Calu3 (cell line): ENCODE measurements at regions of chr17 and their contacts with region 1.

Region 1: DNA sequence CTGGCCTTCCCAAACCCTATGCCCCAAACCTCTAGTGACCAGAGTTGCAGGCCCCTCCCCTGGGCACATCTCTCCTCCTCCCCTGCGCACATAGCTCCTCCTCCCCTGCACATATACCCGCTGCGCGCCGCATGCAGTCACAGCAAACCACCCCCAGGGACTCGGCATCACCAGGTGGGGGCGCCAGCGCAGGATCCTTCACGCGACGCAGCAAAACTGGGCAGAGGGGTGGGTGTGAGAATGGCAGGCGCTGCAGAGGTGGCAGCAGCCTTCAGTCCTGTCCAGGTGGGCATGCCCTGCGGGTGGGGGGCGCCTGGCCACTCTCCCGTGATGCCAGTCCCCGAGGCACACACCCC is 5.6 kb downstream of the CORO6 start:
- DNase-seq: peak; percentile 86
- H3K4me3 Mint-ChIP-seq: peak overlapping the region; percentile 81
- H3K27ac Mint-ChIP-seq: no peak overlapping the region
- H3K4me1 Mint-ChIP-seq: peaks cover 14% of the 10 kb centered on the region
- H3K27me3 Mint-ChIP-seq: peaks cover 37% of the 10 kb centered on the region
- CTCF ChIP-seq: peak; percentile 67

Region 2: DNA sequence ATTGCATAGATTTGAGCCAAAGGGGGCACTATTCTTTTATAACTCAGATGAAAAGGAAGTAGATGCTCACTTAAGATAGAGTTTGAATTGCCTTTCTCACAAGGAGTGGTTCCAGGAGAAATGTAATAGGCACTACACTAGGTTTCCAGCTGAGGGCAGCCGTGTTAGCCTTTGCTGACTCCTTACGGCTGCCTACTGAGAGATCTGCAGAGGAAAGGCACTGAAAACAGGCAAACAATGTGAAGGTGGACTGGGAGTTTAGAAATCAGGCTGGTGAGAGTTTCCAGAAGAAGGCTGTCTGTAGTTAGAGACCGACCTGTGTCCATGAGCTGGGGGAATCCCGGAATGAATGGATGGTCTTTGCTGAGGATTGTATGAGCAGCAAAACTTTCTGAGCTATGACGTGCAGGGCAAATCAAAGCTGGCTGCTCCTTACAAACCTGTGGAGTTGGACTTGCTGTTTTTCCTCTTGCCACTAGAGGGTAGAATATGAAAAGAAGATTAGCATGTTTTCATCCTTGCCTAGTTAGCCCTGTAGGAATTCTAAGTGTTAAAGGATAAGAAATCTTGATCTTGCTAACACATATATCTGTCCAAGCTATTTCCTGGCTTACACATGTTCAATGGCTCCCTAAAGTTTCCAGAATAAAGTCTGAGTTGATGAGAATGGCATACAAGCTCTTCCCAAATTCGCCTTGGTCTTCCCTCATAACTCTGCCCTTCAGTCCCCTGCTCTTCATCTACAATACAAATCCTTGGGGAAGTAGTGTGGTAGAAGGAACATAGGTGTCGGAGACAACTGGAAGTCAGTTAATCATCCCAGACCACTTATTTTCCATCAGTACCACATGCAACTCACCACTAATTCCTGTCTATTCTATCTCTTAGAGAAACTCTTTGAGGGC is 247.0 kb before region 1 on chr17:
- CTCF ChIA-PET with region 1: interaction called, 11 read pairs
- intact Hi-C with region 1: no loop called
- DNase-seq: peak; percentile 55
- H3K4me3 Mint-ChIP-seq: no peak overlapping the region
- H3K27ac Mint-ChIP-seq: no peak overlapping the region
- H3K4me1 Mint-ChIP-seq: peaks cover 6% of the 10 kb centered on the region
- H3K27me3 Mint-ChIP-seq: no peaks in the 10 kb centered on the region
- CTCF ChIP-seq: peak; percentile 58

Region 3: DNA sequence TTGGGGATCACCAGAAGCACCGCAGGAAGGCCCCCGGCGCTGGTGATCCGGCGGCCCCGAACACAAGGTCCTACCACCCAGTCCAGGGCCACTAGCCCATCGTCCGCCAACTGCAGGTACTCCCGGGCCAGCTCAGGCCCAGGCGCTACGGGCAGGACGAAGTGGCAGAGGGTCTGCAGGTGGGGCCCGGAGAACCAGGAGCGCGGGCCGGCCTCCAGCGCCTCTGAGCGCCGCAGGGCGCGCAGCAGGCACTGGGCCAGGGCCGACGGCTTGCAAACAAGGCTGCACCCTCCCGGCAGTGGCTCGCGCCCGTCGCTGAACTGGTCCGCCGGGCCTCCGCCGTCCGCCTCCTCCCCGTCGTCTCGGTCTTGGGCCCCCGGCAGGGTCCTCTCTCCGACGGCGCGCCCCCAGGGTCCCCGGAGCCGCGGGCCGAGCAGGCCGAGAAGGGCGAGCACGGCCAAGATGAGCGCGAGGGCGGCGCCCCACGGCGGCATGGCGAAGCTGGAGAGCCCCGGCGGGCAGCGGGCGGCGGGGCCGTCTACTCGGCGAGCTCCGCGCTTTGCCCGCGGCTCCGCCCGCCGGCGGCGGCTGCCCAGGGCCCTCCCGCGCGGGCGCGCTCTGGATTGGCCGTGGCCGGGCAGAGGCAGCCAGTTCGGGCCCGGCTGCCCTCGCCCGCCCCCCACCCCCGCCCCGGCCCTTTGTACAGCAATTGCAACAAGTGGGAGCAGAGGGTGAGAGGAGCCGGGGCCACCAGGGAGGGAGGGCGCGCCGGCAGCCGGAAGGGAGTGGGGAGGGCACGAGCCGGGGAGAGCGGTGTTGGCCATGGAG is 50.4 kb before region 1 on chr17 and contains the start of gene ABHD15:
- CTCF ChIA-PET with region 1: interaction called, 12 read pairs
- intact Hi-C with region 1: no loop called
- DNase-seq: peak; percentile 85
- H3K4me3 Mint-ChIP-seq: peak within 1 kb of the TSS; percentile 85
- H3K27ac Mint-ChIP-seq: peak within 1 kb of the TSS; percentile 82
- H3K4me1 Mint-ChIP-seq: no peaks in the 10 kb centered on the region
- H3K27me3 Mint-ChIP-seq: no peaks in the 10 kb centered on the region
- CTCF ChIP-seq: no peak
- total RNA-seq, gene ABHD15: 12.5 and 12.9 TPM in 2 replicates

Region 4: GRCh38 chr17:29579866-29580771 is 37.0 kb before region 1 on chr17:
- CTCF ChIA-PET with region 1: interaction called, 11 read pairs
- intact Hi-C with region 1: loop called (anchors 5 kb)
- DNase-seq: peak; percentile 90
- H3K4me3 Mint-ChIP-seq: no peak overlapping the region
- H3K27ac Mint-ChIP-seq: no peak overlapping the region
- H3K4me1 Mint-ChIP-seq: peaks cover 9% of the 10 kb centered on the region
- H3K27me3 Mint-ChIP-seq: no peaks in the 10 kb centered on the region
- CTCF ChIP-seq: peak; percentile 81

Region 5: GRCh38 chr17:29589524-29590410 is 27.3 kb before region 1 on chr17 and contains the start of gene GIT1:
- CTCF ChIA-PET with region 1: interaction called, 36 read pairs
- intact Hi-C with region 1: loop called (anchors 5 kb)
- DNase-seq: peak; percentile 91
- H3K4me3 Mint-ChIP-seq: peak within 1 kb of the TSS; percentile 79
- H3K27ac Mint-ChIP-seq: peak within 1 kb of the TSS; percentile 78
- H3K4me1 Mint-ChIP-seq: peaks cover 41% of the 10 kb centered on the region
- H3K27me3 Mint-ChIP-seq: no peaks in the 10 kb centered on the region
- CTCF ChIP-seq: peak; percentile 11
- total RNA-seq, gene GIT1: 46.3 and 47.7 TPM in 2 replicates

Region 6: DNA sequence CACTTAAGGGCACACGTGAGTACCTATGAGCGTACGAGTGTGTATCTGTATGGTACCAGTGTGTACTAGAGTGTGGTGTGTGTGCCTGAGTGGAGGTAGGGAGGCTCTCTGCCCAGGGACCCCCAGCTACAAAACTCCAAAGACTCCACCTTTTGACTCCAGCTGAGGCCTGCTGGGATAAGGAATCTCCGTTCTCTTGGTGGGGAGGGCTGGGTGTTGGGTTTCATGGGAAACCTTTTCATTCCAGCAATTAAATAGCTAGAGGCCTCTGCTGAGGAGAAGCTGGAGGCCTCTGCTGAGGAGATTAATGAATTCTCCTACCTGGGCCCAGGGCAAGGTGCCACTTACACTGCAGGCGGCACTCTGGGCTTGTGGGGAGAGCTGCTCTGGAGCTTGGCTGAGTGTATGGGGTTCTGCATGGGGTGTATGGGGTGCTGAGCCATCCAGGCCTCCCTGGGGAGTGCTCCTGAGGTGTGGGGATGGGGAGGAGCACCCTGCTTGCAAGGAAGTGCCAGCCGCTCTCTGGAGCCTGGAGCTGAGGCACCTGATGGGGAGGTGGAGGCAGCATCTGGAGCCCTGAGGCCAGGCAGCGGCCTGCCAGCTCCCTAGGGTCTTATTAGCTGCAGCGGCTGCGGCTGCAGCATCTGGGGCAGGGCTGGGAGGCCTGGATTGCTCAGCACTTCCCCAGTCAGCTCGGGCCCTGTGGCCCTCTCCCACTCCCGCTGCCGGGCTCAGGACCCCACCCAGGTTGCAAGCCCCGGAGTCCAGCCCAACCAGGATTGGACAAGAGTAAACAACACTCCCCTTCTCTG is 19.5 kb before region 1 on chr17:
- CTCF ChIA-PET with region 1: interaction called, 36 read pairs
- intact Hi-C with region 1: no loop called
- DNase-seq: no peak
- H3K4me3 Mint-ChIP-seq: no peak overlapping the region
- H3K27ac Mint-ChIP-seq: no peak overlapping the region
- H3K4me1 Mint-ChIP-seq: peaks cover 3% of the 10 kb centered on the region
- H3K27me3 Mint-ChIP-seq: no peaks in the 10 kb centered on the region
- CTCF ChIP-seq: no peak

Region 7: GRCh38 chr17:29640413-29640812 is 23.3 kb after region 1 on chr17:
- CTCF ChIA-PET with region 1: interaction called, 10 read pairs
- intact Hi-C with region 1: no loop called
- DNase-seq: no peak
- H3K4me3 Mint-ChIP-seq: no peak overlapping the region
- H3K27ac Mint-ChIP-seq: no peak overlapping the region
- H3K4me1 Mint-ChIP-seq: peaks cover 18% of the 10 kb centered on the region
- H3K27me3 Mint-ChIP-seq: no peaks in the 10 kb centered on the region
- CTCF ChIP-seq: no peak

Region 8: DNA sequence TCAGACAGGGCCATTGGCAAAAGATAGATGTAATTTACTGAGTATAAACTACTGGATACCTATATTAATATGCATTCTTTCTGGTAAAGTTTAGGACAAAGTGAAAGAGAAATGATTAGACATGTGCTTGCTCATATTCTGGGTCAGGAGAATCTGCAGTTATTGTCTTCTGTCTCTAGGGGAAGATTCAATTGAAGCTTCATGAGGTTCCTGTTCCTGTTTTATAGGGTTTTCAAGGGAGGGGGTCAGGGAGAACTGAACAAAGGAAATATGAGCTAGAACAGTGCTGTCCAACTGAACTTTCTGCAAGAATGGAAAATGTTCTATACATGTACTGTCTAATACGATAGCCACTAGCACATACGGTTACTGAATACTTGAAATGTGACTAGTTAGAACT is 65.0 kb after region 1 on chr17:
- CTCF ChIA-PET with region 1: no interaction called
- intact Hi-C with region 1: no loop called
- DNase-seq: no peak
- H3K4me3 Mint-ChIP-seq: no peak overlapping the region
- H3K27ac Mint-ChIP-seq: no peak overlapping the region
- H3K4me1 Mint-ChIP-seq: no peaks in the 10 kb centered on the region
- H3K27me3 Mint-ChIP-seq: no peaks in the 10 kb centered on the region
- CTCF ChIP-seq: no peak

Region 9: DNA sequence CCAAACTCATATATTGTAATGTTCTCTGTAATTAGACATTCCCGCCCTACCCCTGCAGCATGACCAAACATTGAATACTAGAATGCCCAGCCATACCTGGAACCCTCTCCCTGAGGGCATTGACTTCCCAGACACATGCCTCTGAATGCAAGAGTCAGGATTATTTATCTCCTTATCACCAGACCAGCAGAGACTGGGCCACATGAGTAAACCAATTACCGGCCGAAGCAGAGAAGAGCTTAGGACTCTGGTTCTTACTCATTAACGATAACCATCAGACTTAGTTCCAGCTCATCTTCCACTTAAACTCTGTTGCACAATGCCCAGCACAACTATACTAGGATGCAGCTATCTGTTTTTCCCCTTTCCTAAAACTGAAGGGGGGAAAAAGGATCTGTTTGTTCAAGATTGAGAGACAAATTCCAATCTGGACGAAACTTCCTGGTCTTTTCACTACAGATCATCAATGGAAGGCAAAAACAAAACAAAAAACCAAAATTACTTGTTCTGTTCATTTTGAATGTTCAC is 93.9 kb after region 1 on chr17:
- CTCF ChIA-PET with region 1: no interaction called
- intact Hi-C with region 1: no loop called
- DNase-seq: no peak
- H3K4me3 Mint-ChIP-seq: no peak overlapping the region
- H3K27ac Mint-ChIP-seq: no peak overlapping the region
- H3K4me1 Mint-ChIP-seq: peaks cover 17% of the 10 kb centered on the region
- H3K27me3 Mint-ChIP-seq: no peaks in the 10 kb centered on the region
- CTCF ChIP-seq: no peak

Region 10: GRCh38 chr17:30041551-30041950 is 424.4 kb after region 1 on chr17:
- CTCF ChIA-PET with region 1: no interaction called
- intact Hi-C with region 1: no loop called
- DNase-seq: no peak
- H3K4me3 Mint-ChIP-seq: no peak overlapping the region
- H3K27ac Mint-ChIP-seq: no peak overlapping the region
- H3K4me1 Mint-ChIP-seq: no peaks in the 10 kb centered on the region
- H3K27me3 Mint-ChIP-seq: peaks cover 52% of the 10 kb centered on the region
- CTCF ChIP-seq: no peak